Naive thymus-derived CD4-positive, alpha-beta T cell (primary cell): ENCODE measurements at regions of chr3 and their contacts with region 1.

Region 1: GRCh38 chr3:124620600-124621063 is 109.6 kb upstream of the UMPS start:
- DNase-seq: peak in 1 of 9 donors; percentile 28
- ATAC-seq: peak; percentile 92
- H3K4me3 ChIP-seq: no peak overlapping the region
- H3K4me3 Mint-ChIP-seq: peak overlapping the region in 8 of 10 donors; percentile 13 to 69 (median 54)
- H3K27ac ChIP-seq: no peak overlapping the region
- H3K27ac Mint-ChIP-seq: peak overlapping the region in 5 of 9 donors; percentile 65 to 85 (median 75)
- H3K4me1 ChIP-seq: peaks cover 0 to 11% of the 10 kb centered on the region in 2 donors
- H3K4me1 Mint-ChIP-seq: peaks cover 11 to 30% (median 21%) of the 10 kb centered on the region in 7 donors
- H3K27me3 ChIP-seq: no peaks in the 10 kb centered on the region
- H3K27me3 Mint-ChIP-seq: peaks cover 0 to 14% (median 0%) of the 10 kb centered on the region in 5 donors

Region 2: GRCh38 chr3:124584552-124585391 is 35.9 kb before region 1 on chr3:
- CTCF ChIA-PET with region 1: no interaction called
- POLR2A ChIA-PET with region 1: no interaction called
- intact Hi-C with region 1: loop called in 1 of 2 experiments (anchors 1 kb)
- DNase-seq: peak in 6 of 9 donors; percentile 3 to 19 (median 11)
- ATAC-seq: peak; percentile 65
- H3K4me3 ChIP-seq: peak overlapping the region; percentile 63
- H3K4me3 Mint-ChIP-seq: peak overlapping the region; percentile 66 to 92 (median 82)
- H3K27ac ChIP-seq: no peak overlapping the region
- H3K27ac Mint-ChIP-seq: peak overlapping the region in 7 of 9 donors; percentile 8 to 75 (median 56)
- H3K4me1 ChIP-seq: peaks cover 0 to 23% of the 10 kb centered on the region in 2 donors
- H3K4me1 Mint-ChIP-seq: peaks cover 12 to 44% (median 23%) of the 10 kb centered on the region in 7 donors
- H3K27me3 ChIP-seq: no peaks in the 10 kb centered on the region
- H3K27me3 Mint-ChIP-seq: peaks cover 0 to 74% (median 45%) of the 10 kb centered on the region in 5 donors

Region 3: GRCh38 chr3:124639406-124640237 is 19.0 kb after region 1 on chr3:
- CTCF ChIA-PET with region 1: no interaction called
- POLR2A ChIA-PET with region 1: no interaction called
- intact Hi-C with region 1: loop called (anchors 1 kb)
- DNase-seq: peak in 1 of 9 donors; percentile 3
- ATAC-seq: peak; percentile 78
- H3K4me3 ChIP-seq: no peak overlapping the region
- H3K4me3 Mint-ChIP-seq: peak overlapping the region in 8 of 10 donors; percentile 44 to 76 (median 59)
- H3K27ac ChIP-seq: peak overlapping the region; percentile 29
- H3K27ac Mint-ChIP-seq: peak overlapping the region in 6 of 9 donors; percentile 32 to 88 (median 50)
- H3K4me1 ChIP-seq: peaks cover 0 to 9% of the 10 kb centered on the region in 2 donors
- H3K4me1 Mint-ChIP-seq: peaks cover 5 to 50% (median 12%) of the 10 kb centered on the region in 7 donors
- H3K27me3 ChIP-seq: no peaks in the 10 kb centered on the region
- H3K27me3 Mint-ChIP-seq: peaks cover 0 to 66% (median 0%) of the 10 kb centered on the region in 5 donors

Region 4: DNA sequence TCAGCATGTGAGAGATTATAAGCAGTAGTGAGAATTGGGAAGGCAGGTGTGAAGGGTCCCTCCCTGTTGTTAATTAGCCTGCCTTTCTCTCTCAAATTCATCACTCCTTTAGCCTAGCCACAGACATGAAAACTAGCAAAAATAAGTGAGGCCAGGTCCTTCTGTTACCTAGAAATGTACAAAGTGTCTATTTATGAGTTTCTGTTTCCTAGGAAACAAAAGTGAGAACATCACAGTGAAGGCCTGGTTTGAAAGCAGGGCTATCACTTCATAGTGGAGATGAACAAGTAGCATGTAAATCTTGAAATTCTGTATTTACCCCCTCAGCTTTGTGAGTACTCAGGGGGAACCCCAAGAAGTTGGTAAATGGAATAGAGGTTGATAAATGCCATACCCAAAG is 31.4 kb after region 1 on chr3:
- CTCF ChIA-PET with region 1: no interaction called
- POLR2A ChIA-PET with region 1: no interaction called
- intact Hi-C with region 1: loop called in 1 of 2 experiments (anchors 1 kb)
- DNase-seq: no peak
- ATAC-seq: peak; percentile 43
- H3K4me3 ChIP-seq: no peak overlapping the region
- H3K4me3 Mint-ChIP-seq: no peak overlapping the region
- H3K27ac ChIP-seq: no peak overlapping the region
- H3K27ac Mint-ChIP-seq: no peak overlapping the region
- H3K4me1 ChIP-seq: no peaks in the 10 kb centered on the region
- H3K4me1 Mint-ChIP-seq: peaks cover 0 to 11% (median 3%) of the 10 kb centered on the region in 7 donors
- H3K27me3 ChIP-seq: no peaks in the 10 kb centered on the region
- H3K27me3 Mint-ChIP-seq: peaks cover 0 to 52% (median 7%) of the 10 kb centered on the region in 5 donors

Region 5: GRCh38 chr3:124688581-124689454 is 68.2 kb after region 1 on chr3:
- CTCF ChIA-PET with region 1: interaction called, 3 read pairs
- POLR2A ChIA-PET with region 1: no interaction called
- intact Hi-C with region 1: loop called (anchors 1 to 5 kb)
- DNase-seq: peak; percentile 26 to 69 (median 49)
- ATAC-seq: peak; percentile 90
- H3K4me3 ChIP-seq: no peak overlapping the region
- H3K4me3 Mint-ChIP-seq: no peak overlapping the region
- H3K27ac ChIP-seq: no peak overlapping the region
- H3K27ac Mint-ChIP-seq: no peak overlapping the region
- H3K4me1 ChIP-seq: no peaks in the 10 kb centered on the region
- H3K4me1 Mint-ChIP-seq: peaks cover 0 to 7% (median 2%) of the 10 kb centered on the region in 7 donors
- H3K27me3 ChIP-seq: peaks cover 0 to 4% of the 10 kb centered on the region in 2 donors
- H3K27me3 Mint-ChIP-seq: peaks cover 0 to 56% (median 18%) of the 10 kb centered on the region in 5 donors

Region 6: GRCh38 chr3:124700880-124701684 is 80.5 kb after region 1 on chr3:
- CTCF ChIA-PET with region 1: no interaction called
- POLR2A ChIA-PET with region 1: no interaction called
- intact Hi-C with region 1: no loop called
- DNase-seq: no peak
- ATAC-seq: no peak
- H3K4me3 ChIP-seq: no peak overlapping the region
- H3K4me3 Mint-ChIP-seq: no peak overlapping the region
- H3K27ac ChIP-seq: no peak overlapping the region
- H3K27ac Mint-ChIP-seq: no peak overlapping the region
- H3K4me1 ChIP-seq: no peaks in the 10 kb centered on the region
- H3K4me1 Mint-ChIP-seq: peaks cover 0 to 6% (median 0%) of the 10 kb centered on the region in 7 donors
- H3K27me3 ChIP-seq: no peaks in the 10 kb centered on the region
- H3K27me3 Mint-ChIP-seq: peaks cover 6 to 36% (median 29%) of the 10 kb centered on the region in 5 donors